ENCODE measurements at regions of chr18 and their contacts with region 1.

Region 1: DNA sequence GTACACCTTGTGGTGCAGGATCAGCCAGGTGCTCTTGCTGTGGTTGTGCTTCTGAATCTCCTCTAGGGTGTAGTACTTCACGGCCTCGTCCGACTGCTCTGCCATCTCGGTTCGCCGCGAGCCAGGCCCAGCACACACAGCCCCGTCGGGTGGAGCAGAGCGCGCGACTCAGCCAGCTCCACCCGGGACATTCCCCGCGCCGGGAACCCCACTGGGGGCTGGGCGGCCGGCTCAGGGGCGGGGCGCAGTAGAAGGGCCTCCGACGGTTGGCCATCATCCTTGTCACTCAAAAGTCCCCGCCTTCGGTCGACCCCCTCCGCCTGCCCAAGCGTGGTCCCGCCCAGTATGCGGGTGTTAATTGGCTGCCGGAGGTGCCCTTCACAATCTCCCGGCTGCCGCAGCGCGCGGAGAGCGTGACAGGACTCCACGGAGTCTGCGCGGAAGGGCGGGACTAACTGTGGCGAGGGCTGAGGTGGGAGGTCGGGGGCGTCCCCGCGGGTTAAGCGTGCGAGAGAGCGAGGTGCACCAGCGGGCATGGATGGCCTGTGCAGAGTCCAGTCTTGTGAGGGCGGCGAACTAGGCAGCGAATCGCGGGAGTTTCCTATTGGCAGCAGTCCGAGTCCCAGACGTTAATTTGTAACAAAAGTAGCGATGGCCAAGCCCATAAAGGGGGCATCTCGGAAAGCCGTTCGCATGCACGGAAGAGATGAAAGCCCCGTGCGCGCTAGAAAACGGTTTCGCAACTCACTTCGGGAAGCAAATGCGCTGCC is at the start of gene CYB5A:
- DNase-seq: peak; percentile 99
- ATAC-seq: peak; percentile 97
- H3K4me3 Mint-ChIP-seq: peak within 1 kb of the TSS; percentile 97
- H3K27ac Mint-ChIP-seq: peak within 1 kb of the TSS; percentile 91
- H3K4me1 Mint-ChIP-seq: peaks cover 49% of the 10 kb centered on the region
- H3K27me3 Mint-ChIP-seq: no peaks in the 10 kb centered on the region
- CTCF ChIP-seq: no peak
- total RNA-seq, gene CYB5A: 46.2 and 47.2 TPM in 2 replicates

Region 2: DNA sequence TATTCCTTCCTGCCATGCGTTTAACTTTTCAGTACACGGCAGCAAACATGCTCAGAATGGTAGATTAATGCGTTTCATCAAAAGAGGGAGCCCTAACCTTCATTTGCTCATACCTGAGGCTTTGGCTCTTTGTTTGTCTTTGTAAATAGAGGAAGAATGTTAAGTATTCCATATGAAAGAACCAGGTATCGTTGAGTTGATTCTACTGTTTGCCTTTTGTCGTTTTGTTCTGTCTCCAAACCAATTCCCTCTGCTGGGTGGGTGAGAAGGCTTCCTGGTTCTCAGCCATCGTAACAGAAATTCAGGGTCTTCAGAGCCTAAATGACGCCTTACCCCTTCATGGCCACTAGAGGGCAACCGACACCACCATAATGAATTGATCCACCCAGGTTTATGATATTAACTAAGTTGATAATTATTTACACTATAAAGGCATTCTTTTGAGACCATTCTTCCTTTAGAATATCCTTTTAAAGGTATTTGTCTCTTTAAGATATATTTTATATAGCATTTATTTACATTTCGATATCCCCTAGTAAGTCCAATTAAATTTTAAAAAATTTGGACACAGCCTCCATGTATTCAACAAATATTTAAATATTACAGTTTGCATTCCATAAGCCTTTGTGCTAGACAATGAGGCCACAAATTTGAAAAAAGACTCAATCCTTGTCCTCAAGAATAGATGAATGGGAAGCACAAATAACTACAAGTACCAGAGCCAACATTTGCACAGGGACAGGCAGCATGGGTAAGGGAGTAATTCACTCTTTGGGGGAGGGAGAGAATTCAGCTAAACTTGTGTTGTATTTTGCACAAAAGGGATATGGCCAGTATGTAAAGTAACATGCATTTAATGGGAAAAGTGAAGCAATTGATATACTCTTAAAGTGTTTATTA is 95.5 kb before region 1 on chr18:
- CTCF ChIA-PET with region 1: no interaction called
- POLR2A ChIA-PET with region 1: no interaction called
- intact Hi-C with region 1: loop called (anchors 1 kb)
- DNase-seq: no peak
- ATAC-seq: peak; percentile 95
- H3K4me3 Mint-ChIP-seq: peak overlapping the region; percentile 78
- H3K27ac Mint-ChIP-seq: peak overlapping the region; percentile 79
- H3K4me1 Mint-ChIP-seq: peaks cover 22% of the 10 kb centered on the region
- H3K27me3 Mint-ChIP-seq: peaks cover 8% of the 10 kb centered on the region
- CTCF ChIP-seq: no peak

Region 3: GRCh38 chr18:74249181-74249968 is 42.6 kb before region 1 on chr18:
- CTCF ChIA-PET with region 1: no interaction called
- POLR2A ChIA-PET with region 1: interaction called, 11 read pairs
- intact Hi-C with region 1: loop called (anchors 2 kb)
- DNase-seq: no peak
- ATAC-seq: no peak
- H3K4me3 Mint-ChIP-seq: peak overlapping the region; percentile 6
- H3K27ac Mint-ChIP-seq: peak overlapping the region; percentile 80
- H3K4me1 Mint-ChIP-seq: peaks cover 51% of the 10 kb centered on the region
- H3K27me3 Mint-ChIP-seq: no peaks in the 10 kb centered on the region
- CTCF ChIP-seq: no peak

Region 4: GRCh38 chr18:74264303-74265020 is 27.5 kb before region 1 on chr18:
- CTCF ChIA-PET with region 1: no interaction called
- POLR2A ChIA-PET with region 1: interaction called, 3 read pairs
- intact Hi-C with region 1: loop called (anchors 1 kb)
- DNase-seq: peak; percentile 30
- ATAC-seq: peak; percentile 99
- H3K4me3 Mint-ChIP-seq: peak overlapping the region; percentile 59
- H3K27ac Mint-ChIP-seq: peak overlapping the region; percentile 86
- H3K4me1 Mint-ChIP-seq: peaks cover 36% of the 10 kb centered on the region
- H3K27me3 Mint-ChIP-seq: no peaks in the 10 kb centered on the region
- CTCF ChIP-seq: no peak

Region 5: DNA sequence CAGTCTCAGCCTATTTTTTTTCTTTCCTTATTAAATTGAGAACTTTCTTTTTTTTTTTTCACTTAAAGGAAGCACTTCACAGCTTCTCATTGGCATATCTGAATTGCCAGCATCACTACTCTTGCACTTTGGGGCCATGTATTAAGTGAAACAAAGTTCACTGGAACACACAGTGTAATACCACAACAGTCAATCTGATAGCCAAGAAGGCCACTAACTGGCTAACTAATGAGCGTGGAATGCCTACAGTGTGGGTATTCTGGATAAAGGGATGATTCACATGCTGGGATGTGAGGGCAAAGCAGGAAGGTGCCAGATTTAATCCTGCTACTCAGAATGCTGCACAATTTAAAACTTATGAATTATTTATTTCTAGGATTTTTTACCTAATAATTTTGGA is 12.0 kb after region 1 on chr18:
- CTCF ChIA-PET with region 1: no interaction called
- POLR2A ChIA-PET with region 1: no interaction called
- intact Hi-C with region 1: loop called (anchors 2 kb)
- DNase-seq: no peak
- ATAC-seq: no peak
- H3K4me3 Mint-ChIP-seq: no peak overlapping the region
- H3K27ac Mint-ChIP-seq: no peak overlapping the region
- H3K4me1 Mint-ChIP-seq: no peaks in the 10 kb centered on the region
- H3K27me3 Mint-ChIP-seq: peaks cover 15% of the 10 kb centered on the region
- CTCF ChIP-seq: no peak

Region 6: DNA sequence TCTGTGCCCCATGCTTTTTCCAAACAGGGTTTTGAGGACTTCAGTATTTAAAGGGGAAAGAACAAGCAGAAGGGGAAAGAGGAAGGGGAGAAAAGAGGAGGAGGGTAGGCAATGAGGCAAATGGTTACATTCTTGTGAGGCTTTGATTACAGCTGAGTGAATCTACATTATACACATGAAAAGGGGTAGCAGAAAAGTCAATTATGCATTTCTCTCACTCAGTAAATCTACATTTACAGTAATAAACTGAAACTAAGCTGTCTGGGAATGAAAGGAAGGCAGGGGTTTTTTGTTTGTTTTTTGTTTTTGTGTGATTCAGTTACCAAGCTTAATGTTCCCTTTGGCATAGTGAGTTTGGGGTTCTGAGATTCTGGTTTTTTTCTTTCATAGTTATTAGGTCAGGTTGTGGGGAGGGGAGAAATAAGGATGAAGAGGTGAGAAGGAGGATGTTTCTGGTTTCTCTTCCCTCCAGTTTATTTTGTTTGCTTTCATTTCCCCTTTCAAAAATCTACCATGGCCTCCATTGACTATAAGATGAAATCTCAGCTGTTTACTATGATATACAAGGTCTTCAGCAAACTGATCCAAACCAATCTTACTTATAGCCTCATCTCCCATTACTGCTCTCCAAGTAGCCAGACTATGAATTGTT is 42.4 kb after region 1 on chr18:
- CTCF ChIA-PET with region 1: no interaction called
- POLR2A ChIA-PET with region 1: interaction called, 5 read pairs
- intact Hi-C with region 1: loop called (anchors 1 kb)
- DNase-seq: no peak
- ATAC-seq: peak; percentile 83
- H3K4me3 Mint-ChIP-seq: peak overlapping the region; percentile 52
- H3K27ac Mint-ChIP-seq: peak overlapping the region; percentile 88
- H3K4me1 Mint-ChIP-seq: peaks cover 44% of the 10 kb centered on the region
- H3K27me3 Mint-ChIP-seq: no peaks in the 10 kb centered on the region
- CTCF ChIP-seq: no peak

Region 7: GRCh38 chr18:74597662-74598349 is 305.9 kb after region 1 on chr18 and contains the start of gene ZNF407:
- CTCF ChIA-PET with region 1: no interaction called
- POLR2A ChIA-PET with region 1: no interaction called
- intact Hi-C with region 1: loop called (anchors 1 kb)
- DNase-seq: peak; percentile 85
- ATAC-seq: peak; percentile 84
- H3K4me3 Mint-ChIP-seq: peak within 1 kb of the TSS; percentile 96
- H3K27ac Mint-ChIP-seq: peak within 1 kb of the TSS; percentile 98
- H3K4me1 Mint-ChIP-seq: peaks cover 49% of the 10 kb centered on the region
- H3K27me3 Mint-ChIP-seq: no peaks in the 10 kb centered on the region
- CTCF ChIP-seq: no peak
- total RNA-seq, gene ZNF407: 24.0 and 26.7 TPM in 2 replicates

Measured in activated B cell treated with CpG ODN at 0.5 μM for 24 hours (primary cell).